BJ (cell line): ENCODE measurements at regions of chr11 and their contacts with region 1.

Region 1: DNA sequence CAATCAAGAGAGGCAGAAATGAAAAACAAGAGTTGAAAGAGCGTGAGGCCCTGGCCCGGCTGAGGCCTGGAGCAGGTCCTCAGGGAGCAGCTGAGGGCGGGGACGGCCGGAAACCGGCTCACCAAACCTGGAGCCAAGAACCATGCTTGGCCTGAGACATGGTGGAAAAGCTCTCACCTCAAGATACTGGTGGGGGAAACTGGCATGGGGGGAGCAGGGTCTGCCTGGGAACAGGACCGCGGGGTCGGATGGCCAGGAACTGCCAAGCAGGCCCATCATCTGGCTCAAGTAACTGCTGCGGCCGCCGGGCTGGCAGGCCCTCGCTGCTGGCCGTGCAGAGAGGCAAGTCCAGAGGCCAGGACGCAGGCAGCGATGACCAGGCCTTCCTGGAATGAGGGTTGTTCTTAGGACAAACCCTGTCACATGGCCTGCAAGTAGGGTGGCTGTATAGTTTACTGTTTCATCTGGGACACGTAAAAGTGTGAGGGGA is 18.9 kb upstream of the WNT11 start:
- DNase-seq: no peak
- H3K4me3 ChIP-seq: no peak overlapping the region
- H3K27me3 ChIP-seq: no peaks in the 10 kb centered on the region; the same call in 1 of the 2 replicates
- CTCF ChIP-seq: no peak

Region 2: DNA sequence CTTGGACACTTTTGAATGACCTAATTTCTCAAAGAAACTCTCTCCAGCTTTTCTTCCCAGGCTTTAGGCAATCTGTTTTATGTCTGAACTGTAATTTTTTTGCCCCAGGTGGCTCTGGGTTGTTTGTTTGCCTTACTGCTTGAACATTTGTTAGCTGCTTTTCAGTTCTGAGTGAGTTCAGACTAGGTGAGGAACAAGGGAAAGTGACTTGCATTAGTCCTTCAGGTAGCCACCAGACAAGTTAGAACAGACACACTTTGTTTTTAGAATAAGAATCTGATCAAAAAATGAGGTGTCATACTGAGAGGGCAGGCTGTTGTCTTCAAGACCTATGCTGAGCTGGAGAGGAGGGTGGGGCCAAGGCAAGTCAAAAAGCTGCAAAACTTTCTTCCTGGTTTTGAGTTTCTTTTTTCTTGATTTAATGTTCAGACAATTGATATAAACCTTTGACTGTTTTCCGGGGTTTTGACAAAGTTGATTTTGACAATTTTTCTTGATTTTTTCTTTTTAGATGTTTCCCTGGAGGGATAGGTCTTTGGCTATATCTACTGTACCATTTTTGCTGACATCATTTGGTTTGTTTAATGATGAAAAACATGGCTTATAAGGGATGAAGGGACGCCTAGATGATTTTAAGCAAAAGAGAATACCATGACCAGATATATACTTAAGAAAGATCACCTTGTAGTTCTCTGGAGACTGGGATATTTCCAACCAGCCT is 201.7 kb before region 1 on chr11:
- CTCF ChIA-PET with region 1: no interaction called
- POLR2A ChIA-PET with region 1: interaction called, 12 read pairs
- DNase-seq: no peak
- H3K4me3 ChIP-seq: no peak overlapping the region
- H3K27me3 ChIP-seq: no peaks in the 10 kb centered on the region
- CTCF ChIP-seq: no peak

Region 3: DNA sequence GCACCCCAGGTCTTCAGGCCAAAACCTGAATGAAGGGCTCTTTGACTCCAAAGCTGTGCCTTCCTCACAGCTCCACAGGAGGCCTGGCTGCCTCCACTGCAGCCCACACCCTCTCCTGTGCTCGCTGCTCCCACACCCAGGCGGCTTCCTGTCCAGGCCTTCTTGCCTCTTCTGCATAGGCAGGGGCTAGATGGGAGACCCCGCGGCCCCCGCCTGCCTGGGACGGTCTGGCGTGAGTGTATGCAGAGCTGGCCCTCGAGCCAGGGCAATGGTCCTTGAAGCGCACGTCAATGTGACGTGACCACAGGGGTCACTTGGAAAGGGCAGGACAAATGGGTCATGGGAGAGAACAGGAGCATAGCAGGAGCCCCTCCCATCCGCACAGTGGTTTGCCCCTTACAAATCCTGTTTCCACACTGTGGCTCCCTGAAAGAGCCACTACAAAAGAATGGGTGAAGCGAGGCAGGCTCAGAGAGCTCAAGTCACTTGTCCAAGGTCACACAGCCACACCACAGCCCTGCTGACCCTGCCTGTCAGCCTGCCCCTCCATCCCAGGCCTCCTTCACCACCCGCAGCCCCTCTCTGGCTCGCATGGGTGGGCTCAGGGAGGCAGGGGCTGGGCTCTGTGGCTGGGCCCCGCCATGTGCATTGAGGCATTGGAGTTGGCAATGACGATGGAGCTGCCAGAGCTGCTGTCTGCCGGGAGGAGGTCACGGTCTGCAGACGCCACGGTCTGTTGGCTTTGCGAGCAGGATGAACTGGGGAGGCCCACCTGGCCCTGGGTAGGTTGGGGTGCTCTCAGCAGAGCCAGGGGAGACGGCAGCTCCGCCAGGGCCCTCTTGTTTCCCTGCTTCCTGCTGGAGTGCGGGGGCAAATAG is 52.4 kb after region 1 on chr11:
- CTCF ChIA-PET with region 1: no interaction called
- POLR2A ChIA-PET with region 1: no interaction called
- DNase-seq: no peak
- H3K4me3 ChIP-seq: no peak overlapping the region
- H3K27me3 ChIP-seq: peaks cover 6% of the 10 kb centered on the region
- CTCF ChIP-seq: no peak